ENCODE measurements at regions of chr2 and their contacts with region 1.

Region 1: DNA sequence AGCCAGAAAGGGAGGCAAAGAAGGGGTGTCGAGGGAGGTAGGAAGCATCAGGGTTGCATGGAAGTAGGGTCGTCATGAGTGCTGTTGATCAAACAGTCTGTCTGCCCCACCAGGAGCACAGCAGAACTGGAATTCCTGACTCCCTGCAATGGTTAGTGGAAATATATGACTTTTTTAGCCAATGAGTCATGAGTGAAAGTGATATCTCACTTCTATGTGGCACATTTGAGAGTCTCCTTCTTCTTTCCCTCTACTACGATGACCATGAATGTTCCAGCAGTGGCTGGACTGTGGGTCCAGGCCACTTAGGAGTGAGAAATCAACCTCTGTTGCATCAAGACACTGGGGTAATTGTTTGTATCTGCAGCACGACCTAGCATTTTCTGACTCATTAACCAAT is 199.5 kb downstream of the TTC32 start:
- DNase-seq: no peak
- ATAC-seq: no peak
- H3K4me3 Mint-ChIP-seq: no peak overlapping the region
- H3K27ac Mint-ChIP-seq: no peak overlapping the region
- H3K4me1 Mint-ChIP-seq: no peaks in the 10 kb centered on the region
- H3K27me3 Mint-ChIP-seq: peaks cover 4% of the 10 kb centered on the region; the same call in 1 of the 2 replicates
- CTCF ChIP-seq: no peak

Region 2: GRCh38 chr2:19738707-19739106 is 36.4 kb after region 1 on chr2:
- CTCF ChIA-PET with region 1: interaction called, 15 read pairs
- POLR2A ChIA-PET with region 1: no interaction called
- DNase-seq: no peak
- ATAC-seq: peak; percentile 40; the same call in 1 of the 2 replicates
- H3K4me3 Mint-ChIP-seq: no peak overlapping the region
- H3K27ac Mint-ChIP-seq: no peak overlapping the region
- H3K4me1 Mint-ChIP-seq: peaks cover 9% of the 10 kb centered on the region
- H3K27me3 Mint-ChIP-seq: no peaks in the 10 kb centered on the region; the same call in 1 of the 2 replicates
- CTCF ChIP-seq: no peak

Region 3: GRCh38 chr2:19863303-19864041 is 161.2 kb after region 1 on chr2:
- CTCF ChIA-PET with region 1: interaction called, 14 read pairs
- POLR2A ChIA-PET with region 1: interaction called, 3 read pairs
- DNase-seq: peak; percentile 94
- ATAC-seq: peak; percentile 91
- H3K4me3 Mint-ChIP-seq: peak overlapping the region; percentile 54
- H3K27ac Mint-ChIP-seq: no peak overlapping the region
- H3K4me1 Mint-ChIP-seq: peaks cover 12% of the 10 kb centered on the region; the same call in 1 of the 2 replicates
- H3K27me3 Mint-ChIP-seq: peaks cover 19% of the 10 kb centered on the region
- CTCF ChIP-seq: peak; percentile 97

Measured in WTC11 (cell line).